ENCODE measurements at regions of chr14 and their contacts with region 1.

Region 1: DNA sequence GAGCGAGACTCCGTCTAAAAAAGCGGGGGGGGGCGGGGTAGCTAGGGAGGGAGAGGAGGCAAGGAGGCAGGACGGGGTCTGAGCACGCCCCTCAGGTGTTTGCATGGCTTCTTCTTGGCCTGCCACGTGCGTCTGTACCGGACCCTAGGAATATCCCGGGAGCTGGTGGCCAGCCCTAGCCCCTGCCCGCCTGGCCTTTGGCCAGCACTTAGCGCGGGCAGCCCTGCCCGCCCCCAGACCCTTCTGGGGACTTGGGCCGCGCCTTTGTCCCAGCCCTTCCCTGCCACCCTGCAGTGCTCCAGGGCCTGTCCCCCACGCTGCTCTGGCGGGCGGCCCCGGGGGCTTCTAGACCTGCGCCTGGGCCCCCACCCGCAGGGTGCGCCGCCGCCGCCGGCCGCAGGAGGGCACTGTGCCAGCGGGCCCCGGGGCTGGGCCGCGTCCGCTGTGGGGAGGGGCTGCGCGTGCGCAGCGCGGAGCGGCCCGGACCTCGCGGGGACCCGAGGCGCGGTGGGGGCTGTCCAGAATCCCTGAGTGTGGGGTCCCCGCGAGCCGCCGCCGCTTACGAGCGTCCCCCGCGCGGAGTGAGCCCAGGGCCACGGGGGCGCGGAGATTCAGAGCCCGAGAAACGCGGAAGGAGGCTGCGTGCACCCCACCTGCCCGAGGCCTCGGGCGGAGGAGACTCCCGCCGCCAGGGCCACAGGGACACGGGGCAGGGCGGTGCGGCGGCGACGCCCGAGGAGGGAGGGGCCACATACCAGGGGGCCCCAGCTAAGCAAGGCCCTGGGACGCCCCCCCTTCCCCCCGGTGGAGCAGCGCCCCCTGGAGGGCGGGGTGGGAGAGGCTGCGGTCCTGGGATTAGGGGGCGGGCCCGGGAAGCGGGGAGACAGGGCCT is 21.0 kb downstream of the SLC25A29 start:
- DNase-seq: peak; percentile 72
- H3K4me3 Mint-ChIP-seq: no peak overlapping the region
- H3K27ac Mint-ChIP-seq: no peak overlapping the region
- H3K4me1 Mint-ChIP-seq: peaks cover 8% of the 10 kb centered on the region
- H3K27me3 Mint-ChIP-seq: no peaks in the 10 kb centered on the region

Region 2: DNA sequence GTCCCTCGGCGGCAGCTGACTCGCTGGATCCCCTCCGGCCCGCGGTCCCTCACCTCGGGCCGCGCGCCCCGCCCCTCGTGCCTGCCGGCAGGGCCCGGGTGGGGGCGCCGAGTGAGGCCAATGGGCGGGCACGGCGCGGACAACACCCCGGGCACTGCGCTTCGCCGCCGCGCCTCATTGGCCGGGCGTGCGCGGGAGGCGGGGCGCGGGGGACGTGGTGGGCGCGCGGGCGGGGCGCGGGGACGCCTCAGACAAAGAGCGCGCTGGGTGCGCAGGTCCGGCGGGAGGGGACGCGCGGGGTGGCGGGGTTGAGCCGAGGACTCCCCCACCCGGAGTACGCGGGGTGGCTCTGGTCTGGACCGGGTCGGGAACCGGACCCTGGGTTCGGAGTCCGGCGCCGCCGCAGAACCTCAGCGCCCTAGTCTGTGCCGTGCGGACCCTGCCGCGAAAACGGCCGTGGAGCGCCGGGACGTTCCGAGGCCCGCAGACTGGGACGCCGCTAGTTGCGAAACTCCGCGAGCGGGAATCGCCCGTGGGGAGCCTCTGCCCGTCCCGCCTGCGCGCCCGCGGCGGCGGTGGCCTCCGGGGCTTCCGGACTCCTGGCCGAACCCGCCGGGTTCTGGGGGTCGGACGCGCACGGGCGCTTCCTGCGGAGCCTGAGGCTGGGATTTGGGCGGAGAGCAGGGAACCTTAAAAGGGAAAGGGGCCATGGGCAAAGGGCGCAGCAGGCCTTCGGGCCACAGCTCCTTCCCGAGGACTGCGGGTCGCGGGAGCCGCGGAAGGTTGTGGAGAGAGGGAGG is 21.4 kb after region 1 on chr14 and contains the start of gene SLC25A29:
- intact Hi-C with region 1: loop called (anchors 1 kb)
- DNase-seq: peak; percentile 69
- H3K4me3 Mint-ChIP-seq: peak within 1 kb of the TSS; percentile 82
- H3K27ac Mint-ChIP-seq: no peak within 1 kb of the TSS
- H3K4me1 Mint-ChIP-seq: peaks cover 20% of the 10 kb centered on the region
- H3K27me3 Mint-ChIP-seq: peaks cover 17% of the 10 kb centered on the region
- total RNA-seq, gene SLC25A29: 37.0 and 38.8 TPM in 2 replicates